ENCODE measurements at regions of chr17 and their contacts with region 1.

Region 1: DNA sequence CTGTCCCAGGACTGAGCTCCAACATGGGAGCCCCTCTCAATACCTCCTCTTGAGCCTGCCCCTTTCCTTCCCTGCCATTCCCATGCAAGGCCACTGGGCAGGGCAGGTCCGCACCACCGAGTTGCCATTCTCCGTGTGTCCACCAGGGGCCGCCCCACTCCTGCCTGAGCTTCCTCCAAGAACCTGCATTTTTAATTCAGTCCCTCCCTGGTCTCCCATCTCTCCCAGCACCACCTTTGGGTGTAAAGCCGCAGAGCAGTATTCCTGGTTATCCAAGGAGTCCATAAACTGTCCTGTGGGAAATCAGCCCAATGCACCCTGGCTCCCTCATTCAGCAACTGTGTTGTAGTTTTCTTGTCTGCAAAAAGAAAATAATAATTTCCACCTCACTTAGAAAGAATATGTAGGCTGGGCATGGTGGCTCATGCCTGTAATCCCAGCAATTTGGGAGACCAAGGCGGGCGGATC is 15.9 kb upstream of the ANKRD40CL start:
- DNase-seq: peak; percentile 79 to 94 (median 90)
- H3K4me3 ChIP-seq: no peak overlapping the region
- H3K27ac ChIP-seq: peak overlapping the region in 2 of 59 donors; percentile 9 to 17
- H3K27me3 ChIP-seq: no peaks in the 10 kb centered on the region
- CTCF ChIP-seq: peak; percentile 69 to 99 (median 96)

Region 2: DNA sequence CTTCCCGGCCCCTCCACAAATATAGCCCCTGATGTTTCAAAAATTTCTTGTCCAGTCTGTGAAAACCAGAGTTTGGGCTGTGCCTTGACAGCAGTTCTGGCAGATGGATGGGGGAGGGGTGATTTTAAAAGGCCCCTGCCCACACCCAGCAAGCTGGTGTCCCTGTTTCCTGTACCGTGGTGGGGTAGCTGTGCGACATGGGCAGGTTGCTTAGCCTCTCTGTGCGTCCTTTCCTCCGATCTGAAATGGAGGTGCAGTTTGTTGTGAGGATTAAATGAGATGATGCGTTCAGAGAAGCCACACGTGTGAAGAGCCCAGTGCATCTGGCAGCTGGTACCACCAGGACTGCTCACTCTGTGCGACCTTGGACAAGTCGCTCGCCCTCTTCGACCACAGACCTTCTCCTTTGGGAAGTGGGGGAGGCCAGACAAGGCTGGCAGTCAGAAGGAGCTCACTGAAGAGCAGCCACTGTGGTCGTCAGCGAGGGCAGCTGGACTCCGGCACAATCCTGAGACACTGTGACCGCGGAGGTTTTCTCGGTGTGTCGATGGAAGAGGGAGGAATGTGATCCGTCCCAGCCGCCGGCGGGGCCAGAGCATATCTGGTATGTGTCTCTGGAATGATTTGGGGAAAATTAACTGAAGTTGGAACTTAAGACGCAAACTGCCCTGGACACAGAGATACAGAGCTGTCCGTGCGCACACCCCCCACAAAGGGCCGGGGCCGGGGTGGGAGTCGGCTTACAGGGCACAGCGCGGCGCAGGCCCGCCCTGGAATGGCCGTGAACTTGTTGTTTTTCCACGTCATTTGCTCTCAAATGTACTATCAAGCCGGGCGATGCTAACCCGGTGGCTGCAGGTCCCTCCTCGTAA is 51.4 kb after region 1 on chr17:
- intact Hi-C with region 1: loop called in 1 of 2 experiments (anchors 5 kb)
- DNase-seq: peak in 1 of 10 donors; percentile 34
- H3K4me3 ChIP-seq: peak overlapping the region in 43 of 59 donors; percentile 5 to 55 (median 27)
- H3K27ac ChIP-seq: peak overlapping the region in 18 of 59 donors; percentile 6 to 75 (median 47)
- H3K27me3 ChIP-seq: no peaks in the 10 kb centered on the region
- CTCF ChIP-seq: no peak

Region 3: GRCh38 chr17:50841949-50842354 is 58.7 kb after region 1 on chr17:
- intact Hi-C with region 1: loop called (anchors 1 to 2 kb)
- DNase-seq: peak in 9 of 10 donors; percentile 77 to 87 (median 84)
- H3K4me3 ChIP-seq: peak overlapping the region in 1 of 59 donors; percentile 8
- H3K27ac ChIP-seq: peak overlapping the region in 26 of 59 donors; percentile 2 to 90 (median 56)
- H3K27me3 ChIP-seq: no peaks in the 10 kb centered on the region
- CTCF ChIP-seq: peak; percentile 43 to 97 (median 89)

Region 4: GRCh38 chr17:50949989-50950881 is 167.0 kb after region 1 on chr17:
- intact Hi-C with region 1: loop called (anchors 2 to 10 kb)
- DNase-seq: peak; percentile 67 to 86 (median 80)
- H3K4me3 ChIP-seq: peak overlapping the region in 19 of 59 donors; percentile 0 to 49 (median 15)
- H3K27ac ChIP-seq: peak overlapping the region; percentile 21 to 95 (median 81)
- H3K27me3 ChIP-seq: no peaks in the 10 kb centered on the region
- CTCF ChIP-seq: peak; percentile 61 to 98 (median 88)

Measured in dorsolateral prefrontal cortex (tissue), 120 donors.